Heart left ventricle (tissue), 16 donors: ENCODE measurements at regions of chr15 and their contacts with region 1.

Region 1: DNA sequence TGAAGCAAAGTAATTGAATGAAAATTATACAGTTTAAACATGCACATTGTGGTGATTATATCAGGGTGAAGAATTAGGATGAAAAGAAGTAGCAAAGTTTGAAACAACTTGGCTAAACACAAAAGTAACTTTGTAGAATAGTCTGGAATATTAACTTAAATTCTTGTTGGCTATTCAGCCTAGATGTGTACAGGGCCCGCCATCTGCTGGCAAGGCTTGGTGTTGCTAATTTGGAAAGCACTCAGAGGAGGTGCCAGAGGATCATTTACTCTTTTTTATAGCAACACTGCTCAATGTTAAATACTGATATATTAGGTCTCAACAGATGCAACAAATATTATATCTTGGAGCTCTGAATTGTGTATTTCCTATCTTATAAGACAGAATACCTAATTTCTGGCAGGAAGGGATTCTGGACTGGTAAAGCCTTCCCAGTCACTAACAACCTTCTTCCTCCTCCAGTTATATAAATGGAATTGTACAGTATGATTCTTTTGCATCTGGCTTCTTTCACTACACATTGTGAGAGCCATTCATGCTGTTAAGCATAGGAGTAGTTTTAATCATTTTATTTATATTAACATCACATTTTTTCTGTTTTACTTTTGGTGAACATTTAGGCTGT is 36.1 kb downstream of the TTC23 start:
- DNase-seq: peak; percentile 75 to 86 (median 77)
- ATAC-seq: peak; percentile 60 to 84 (median 82)
- H3K4me3 ChIP-seq: no peak overlapping the region
- H3K27ac ChIP-seq: peak overlapping the region in 7 of 12 donors; percentile 40 to 85 (median 67)
- H3K4me1 ChIP-seq: peaks cover 0 to 16% (median 0%) of the 10 kb centered on the region in 12 donors
- H3K27me3 ChIP-seq: no peaks in the 10 kb centered on the region
- CTCF ChIP-seq: peak; percentile 80 to 97 (median 92)
- POLR2A ChIP-seq: no peak

Region 2: GRCh38 chr15:99143655-99144610 is 69.4 kb before region 1 on chr15:
- intact Hi-C with region 1: loop called in 1 of 10 experiments (anchors 1 kb)
- DNase-seq: peak in 2 of 5 donors; percentile 74 to 76
- ATAC-seq: peak; percentile 62 to 85 (median 78)
- H3K4me3 ChIP-seq: no peak overlapping the region
- H3K27ac ChIP-seq: peak overlapping the region in 4 of 12 donors; percentile 43 to 98 (median 59)
- H3K4me1 ChIP-seq: peaks cover 0 to 31% (median 7%) of the 10 kb centered on the region in 12 donors
- H3K27me3 ChIP-seq: no peaks in the 10 kb centered on the region
- CTCF ChIP-seq: no peak
- POLR2A ChIP-seq: no peak

Region 3: GRCh38 chr15:99169769-99170311 is 43.5 kb before region 1 on chr15:
- intact Hi-C with region 1: loop called in 8 of 10 experiments (anchors 2 to 5 kb)
- DNase-seq: peak in 2 of 5 donors; percentile 29 to 53
- ATAC-seq: peak; percentile 40 to 57 (median 52)
- H3K4me3 ChIP-seq: no peak overlapping the region
- H3K27ac ChIP-seq: peak overlapping the region; percentile 62 to 94 (median 83)
- H3K4me1 ChIP-seq: peaks cover 0 to 65% (median 20%) of the 10 kb centered on the region in 12 donors
- H3K27me3 ChIP-seq: no peaks in the 10 kb centered on the region
- CTCF ChIP-seq: no peak
- POLR2A ChIP-seq: no peak